CD8-positive, alpha-beta memory T cell (primary cell): ENCODE measurements at regions of chr12 and their contacts with region 1.

Region 1: GRCh38 chr12:123250484-123251383 is 17.5 kb downstream of the MTRFR start:
- DNase-seq: no peak
- H3K4me3 ChIP-seq: no peak overlapping the region
- H3K4me3 Mint-ChIP-seq: peak overlapping the region in 2 of 7 donors; percentile 0 to 65
- H3K27ac ChIP-seq: peak overlapping the region; percentile 27
- H3K27ac Mint-ChIP-seq: peak overlapping the region; percentile 5 to 96 (median 66)
- H3K4me1 ChIP-seq: peaks cover 24% of the 10 kb centered on the region
- H3K4me1 Mint-ChIP-seq: peaks cover 45 to 69% (median 51%) of the 10 kb centered on the region in 3 donors
- H3K27me3 ChIP-seq: no peaks in the 10 kb centered on the region
- H3K27me3 Mint-ChIP-seq: no peaks in the 10 kb centered on the region

Region 2: GRCh38 chr12:121637231-121637914 is 1613.4 kb before region 1 on chr12:
- CTCF ChIA-PET with region 1: no interaction called
- POLR2A ChIA-PET with region 1: interaction called, 11 read pairs
- DNase-seq: peak; percentile 37 to 72 (median 61)
- H3K4me3 ChIP-seq: peak overlapping the region; percentile 53
- H3K4me3 Mint-ChIP-seq: peak overlapping the region; percentile 39 to 88 (median 74)
- H3K27ac ChIP-seq: peak overlapping the region; percentile 69
- H3K27ac Mint-ChIP-seq: peak overlapping the region; percentile 85 to 96 (median 92)
- H3K4me1 ChIP-seq: peaks cover 54% of the 10 kb centered on the region
- H3K4me1 Mint-ChIP-seq: peaks cover 41 to 65% (median 46%) of the 10 kb centered on the region in 3 donors
- H3K27me3 ChIP-seq: no peaks in the 10 kb centered on the region
- H3K27me3 Mint-ChIP-seq: no peaks in the 10 kb centered on the region

Region 3: DNA sequence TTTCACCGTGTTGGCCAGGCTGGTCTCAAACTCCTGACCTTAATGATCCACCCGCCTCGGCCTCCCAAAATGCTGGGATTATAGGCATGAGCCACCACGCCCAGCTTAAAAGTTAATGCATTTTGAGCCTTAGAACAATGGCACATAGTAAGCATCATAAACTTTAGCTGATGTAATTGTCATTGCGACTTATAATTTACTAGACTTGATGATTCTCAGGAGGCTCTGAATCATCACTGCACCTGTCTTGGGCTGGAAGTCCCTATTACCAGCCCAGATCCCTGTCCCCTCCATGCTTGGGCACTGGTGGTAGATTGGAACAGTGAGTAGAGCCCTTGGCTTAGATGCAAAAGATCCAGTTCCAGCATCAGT is 159.3 kb after region 1 on chr12:
- CTCF ChIA-PET with region 1: no interaction called
- POLR2A ChIA-PET with region 1: no interaction called
- DNase-seq: no peak
- H3K4me3 ChIP-seq: no peak overlapping the region
- H3K4me3 Mint-ChIP-seq: peak overlapping the region in 1 of 7 donors; percentile 27
- H3K27ac ChIP-seq: no peak overlapping the region
- H3K27ac Mint-ChIP-seq: peak overlapping the region in 3 of 8 donors; percentile 23 to 75 (median 26)
- H3K4me1 ChIP-seq: no peaks in the 10 kb centered on the region
- H3K4me1 Mint-ChIP-seq: peaks cover 0 to 2% (median 0%) of the 10 kb centered on the region in 3 donors
- H3K27me3 ChIP-seq: no peaks in the 10 kb centered on the region
- H3K27me3 Mint-ChIP-seq: no peaks in the 10 kb centered on the region